ENCODE measurements at regions of chr14 and their contacts with region 1.

Region 1: GRCh38 chr14:20613094-20614037 is 22.2 kb upstream of the RNASE12 start:
- DNase-seq: peak; percentile 77 to 94 (median 86)
- H3K4me3 ChIP-seq: peak overlapping the region in 2 of 4 donors; percentile 17 to 65
- H3K27ac ChIP-seq: peak overlapping the region in 3 of 5 donors; percentile 53 to 84 (median 67)
- H3K4me1 ChIP-seq: peaks cover 0 to 11% of the 10 kb centered on the region in 2 donors
- H3K27me3 ChIP-seq: no peaks in the 10 kb centered on the region
- CTCF ChIP-seq: peak; percentile 25 to 98 (median 88)
- POLR2A ChIP-seq: no peak

Region 2: GRCh38 chr14:20314026-20314425 is 299.3 kb before region 1 on chr14:
- intact Hi-C with region 1: no loop called
- DNase-seq: no peak
- H3K4me3 ChIP-seq: no peak overlapping the region
- H3K27ac ChIP-seq: no peak overlapping the region
- H3K4me1 ChIP-seq: no peaks in the 10 kb centered on the region
- H3K27me3 ChIP-seq: no peaks in the 10 kb centered on the region
- CTCF ChIP-seq: no peak
- POLR2A ChIP-seq: no peak

Region 3: GRCh38 chr14:20327005-20327869 is 286.1 kb before region 1 on chr14:
- intact Hi-C with region 1: loop called (anchors 5 kb)
- DNase-seq: peak in 3 of 7 donors; percentile 19 to 42 (median 31)
- H3K4me3 ChIP-seq: no peak overlapping the region
- H3K27ac ChIP-seq: peak overlapping the region in 4 of 5 donors; percentile 10 to 63 (median 54)
- H3K4me1 ChIP-seq: peaks cover 12 to 22% of the 10 kb centered on the region in 2 donors
- H3K27me3 ChIP-seq: no peaks in the 10 kb centered on the region
- CTCF ChIP-seq: peak; percentile 70 to 93 (median 88)
- POLR2A ChIP-seq: no peak

Region 4: DNA sequence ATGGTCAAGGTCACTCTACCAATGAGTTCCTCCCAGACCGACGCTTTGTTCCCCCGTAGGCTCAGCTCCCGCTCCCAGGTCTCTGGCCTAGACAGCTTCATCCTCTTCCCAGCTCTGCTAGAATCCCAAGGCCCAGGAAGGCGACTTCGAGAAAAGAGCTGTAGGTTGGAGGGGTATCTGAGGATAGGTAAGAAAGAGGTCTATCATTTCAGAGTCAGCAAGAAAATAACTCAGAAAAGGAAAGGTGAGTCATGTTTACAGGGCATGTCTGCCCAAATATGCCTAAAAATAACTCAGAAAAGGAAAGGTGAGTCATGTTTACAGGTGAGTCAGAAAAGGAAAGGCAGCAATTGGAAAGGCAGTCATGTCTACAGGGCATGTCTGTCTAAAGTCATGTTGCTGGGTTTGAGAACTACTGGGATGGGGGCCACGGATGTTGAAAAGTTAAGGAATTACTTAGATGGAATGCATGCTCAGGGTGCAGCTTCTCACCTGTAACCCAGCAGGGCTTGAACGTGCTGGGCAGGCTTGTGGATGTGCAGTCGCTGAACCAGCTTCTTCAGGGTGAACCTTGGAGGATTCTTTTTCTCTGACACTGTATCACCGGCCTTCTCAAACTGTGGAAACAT is 212.3 kb before region 1 on chr14:
- intact Hi-C with region 1: loop called in 1 of 2 experiments (anchors 10 kb)
- DNase-seq: no peak
- H3K4me3 ChIP-seq: no peak overlapping the region
- H3K27ac ChIP-seq: no peak overlapping the region
- H3K4me1 ChIP-seq: no peaks in the 10 kb centered on the region
- H3K27me3 ChIP-seq: no peaks in the 10 kb centered on the region
- CTCF ChIP-seq: no peak
- POLR2A ChIP-seq: no peak

Region 5: DNA sequence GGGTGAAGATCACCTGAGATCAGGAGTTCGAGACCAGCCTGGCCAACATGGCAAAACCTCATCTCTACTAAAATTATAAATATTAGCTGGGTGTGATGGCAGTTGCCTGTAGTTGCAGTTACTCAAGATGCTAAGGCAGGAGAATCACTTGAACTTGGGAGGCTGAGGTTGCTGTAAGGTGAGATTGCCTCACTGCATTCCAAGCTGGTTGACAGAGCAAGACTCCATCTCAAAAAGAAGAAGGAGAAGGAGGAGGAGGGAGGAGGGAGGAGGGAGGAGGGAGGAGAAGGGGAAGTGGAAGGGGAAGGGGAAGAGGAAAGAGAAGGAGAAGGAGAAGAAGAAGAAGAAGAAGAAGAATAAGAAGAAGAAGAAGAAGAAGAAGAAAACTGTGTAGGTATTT is 91.0 kb before region 1 on chr14:
- intact Hi-C with region 1: loop called (anchors 5 to 10 kb)
- DNase-seq: no peak
- H3K4me3 ChIP-seq: no peak overlapping the region
- H3K27ac ChIP-seq: no peak overlapping the region
- H3K4me1 ChIP-seq: no peaks in the 10 kb centered on the region
- H3K27me3 ChIP-seq: no peaks in the 10 kb centered on the region
- CTCF ChIP-seq: no peak
- POLR2A ChIP-seq: no peak

Region 6: GRCh38 chr14:20530771-20531571 is 82.4 kb before region 1 on chr14:
- intact Hi-C with region 1: loop called (anchors 5 to 10 kb)
- DNase-seq: peak; percentile 70 to 92 (median 85)
- H3K4me3 ChIP-seq: no peak overlapping the region
- H3K27ac ChIP-seq: no peak overlapping the region
- H3K4me1 ChIP-seq: no peaks in the 10 kb centered on the region
- H3K27me3 ChIP-seq: no peaks in the 10 kb centered on the region
- CTCF ChIP-seq: peak; percentile 49 to 72 (median 60)
- POLR2A ChIP-seq: no peak

Region 7: DNA sequence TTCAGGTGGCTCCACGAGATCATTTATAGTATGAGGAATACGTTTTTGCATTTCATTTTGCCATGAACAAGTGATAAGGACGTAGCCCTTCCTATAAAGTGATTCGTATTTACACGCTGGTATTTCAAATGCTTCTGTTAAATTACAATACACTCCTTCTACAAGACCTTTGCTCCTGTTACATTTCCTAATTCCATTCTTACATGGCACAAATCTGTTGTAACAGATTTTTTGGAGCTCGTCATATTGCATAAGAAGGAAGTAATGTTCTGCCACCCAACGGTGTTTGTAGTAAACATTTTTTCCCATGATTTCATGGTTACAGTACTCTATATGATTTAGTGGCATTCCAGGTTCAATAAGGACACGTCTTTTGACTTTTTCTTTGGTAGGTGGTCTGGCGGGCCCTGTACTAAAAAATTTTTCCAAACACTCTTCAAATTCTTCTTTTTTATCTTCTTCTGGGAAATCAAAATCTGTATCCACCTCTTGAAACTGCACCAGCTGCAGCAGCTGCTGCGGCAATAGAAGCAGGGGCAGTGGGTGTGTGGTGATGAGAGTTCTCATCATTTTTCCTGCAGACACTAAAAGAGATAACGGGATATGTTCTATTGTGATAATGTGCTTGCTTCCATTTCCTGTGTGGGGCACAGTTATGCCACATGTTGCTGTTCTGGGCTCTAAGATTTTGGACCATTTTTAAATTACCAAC is 56.7 kb before region 1 on chr14:
- intact Hi-C with region 1: no loop called
- DNase-seq: no peak
- H3K4me3 ChIP-seq: no peak overlapping the region
- H3K27ac ChIP-seq: no peak overlapping the region
- H3K4me1 ChIP-seq: no peaks in the 10 kb centered on the region
- H3K27me3 ChIP-seq: no peaks in the 10 kb centered on the region
- CTCF ChIP-seq: no peak
- POLR2A ChIP-seq: no peak

Region 8: DNA sequence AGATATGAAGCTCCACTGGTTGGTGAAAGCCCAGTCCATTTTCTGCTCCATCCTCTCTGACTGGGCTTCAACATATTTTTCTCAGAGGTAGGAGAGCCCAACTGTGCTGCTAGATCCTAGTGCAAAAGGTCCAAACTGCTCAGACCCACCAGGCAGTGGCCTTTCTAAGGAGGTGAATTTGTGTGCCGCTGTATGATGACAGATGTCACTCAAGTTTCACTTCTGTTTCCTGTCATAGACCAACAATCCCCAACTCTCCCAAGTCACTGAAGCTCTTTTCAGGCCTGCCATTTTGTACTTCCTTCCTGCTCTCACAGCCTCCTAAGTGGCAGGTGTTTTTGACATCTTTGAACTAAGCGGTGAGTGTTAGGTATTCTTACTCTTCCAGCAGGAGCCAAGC is 54.6 kb after region 1 on chr14:
- intact Hi-C with region 1: no loop called
- DNase-seq: no peak
- H3K4me3 ChIP-seq: no peak overlapping the region
- H3K27ac ChIP-seq: no peak overlapping the region
- H3K4me1 ChIP-seq: no peaks in the 10 kb centered on the region
- H3K27me3 ChIP-seq: peaks cover 5% of the 10 kb centered on the region
- CTCF ChIP-seq: no peak
- POLR2A ChIP-seq: no peak

Region 9: DNA sequence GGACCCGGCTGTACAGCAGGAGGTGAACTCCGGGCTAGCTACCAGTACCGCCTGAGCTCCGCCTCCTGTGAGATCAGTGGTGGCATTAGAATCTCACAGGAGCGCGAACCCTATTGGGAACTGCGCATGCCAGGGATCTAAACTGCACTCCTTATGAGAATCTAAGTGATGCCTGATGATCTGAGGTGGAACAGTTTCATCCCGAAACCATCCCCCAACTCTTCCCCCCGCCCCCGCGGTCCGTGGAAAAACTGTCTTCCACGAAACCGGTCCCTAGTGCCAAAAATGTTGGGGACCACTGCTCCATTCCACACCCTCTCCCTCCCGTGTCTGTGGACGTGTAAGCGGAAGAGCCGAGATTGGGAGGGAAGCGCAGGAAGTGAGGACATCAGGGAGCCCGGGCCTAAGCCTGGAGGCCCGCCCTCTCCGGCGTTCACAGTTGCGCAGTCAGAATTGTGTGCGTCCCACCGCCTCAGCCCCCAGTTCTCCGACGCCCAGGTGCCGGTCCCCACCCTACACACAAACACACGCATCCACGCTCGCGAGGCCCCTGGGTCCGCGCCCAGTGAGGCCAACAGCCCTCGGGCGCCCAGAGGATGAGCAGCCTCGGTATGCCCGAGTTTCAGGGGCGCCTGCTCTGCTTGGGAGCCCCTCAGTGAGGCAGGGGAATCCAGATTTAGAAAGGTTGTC is 69.2 kb after region 1 on chr14:
- intact Hi-C with region 1: loop called (anchors 2 to 5 kb)
- DNase-seq: peak; percentile 86 to 96 (median 91)
- H3K4me3 ChIP-seq: peak overlapping the region; percentile 44 to 87 (median 64)
- H3K27ac ChIP-seq: peak overlapping the region; percentile 95 to 100 (median 100)
- H3K4me1 ChIP-seq: peaks cover 11 to 21% of the 10 kb centered on the region in 2 donors
- H3K27me3 ChIP-seq: no peaks in the 10 kb centered on the region
- CTCF ChIP-seq: peak in 1 of 6 experiments; percentile 2
- POLR2A ChIP-seq: peak; percentile 93 to 95

Region 10: DNA sequence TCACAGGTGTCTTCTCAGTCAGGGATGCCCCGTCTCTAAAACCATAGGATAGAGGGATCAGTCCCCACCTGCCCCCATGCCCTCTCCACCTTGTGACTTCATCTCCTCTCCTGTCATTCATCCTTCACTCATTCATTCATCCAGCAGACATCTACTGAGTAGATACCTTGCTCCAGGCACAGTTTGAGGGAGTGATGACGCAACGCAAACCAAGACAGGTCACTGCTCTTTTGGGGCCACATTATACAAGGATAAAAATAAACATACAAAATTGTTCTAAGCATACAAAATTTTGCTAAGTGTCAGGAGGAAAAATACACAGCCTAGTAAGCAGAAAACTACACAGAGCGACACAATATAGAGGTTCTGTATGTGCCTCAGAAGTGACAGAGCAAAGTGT is 309.1 kb after region 1 on chr14:
- intact Hi-C with region 1: no loop called
- DNase-seq: no peak
- H3K4me3 ChIP-seq: no peak overlapping the region
- H3K27ac ChIP-seq: no peak overlapping the region
- H3K4me1 ChIP-seq: no peaks in the 10 kb centered on the region
- H3K27me3 ChIP-seq: no peaks in the 10 kb centered on the region
- CTCF ChIP-seq: no peak
- POLR2A ChIP-seq: no peak